IMR-90 (cell line): ENCODE measurements at regions of chr2 and their contacts with region 1.

Region 1: GRCh38 chr2:164000176-164000575 is 264.4 kb upstream of the FIGN start:
- DNase-seq: no peak
- ATAC-seq: no peak
- H3K4me3 ChIP-seq: no peak overlapping the region
- H3K27ac ChIP-seq: no peak overlapping the region
- H3K4me1 ChIP-seq: no peaks in the 10 kb centered on the region
- H3K27me3 ChIP-seq: no peaks in the 10 kb centered on the region
- CTCF ChIP-seq: no peak
- POLR2A ChIP-seq: no peak
- RAD21 ChIP-seq: no peak

Region 2: GRCh38 chr2:164023896-164024295 is 23.7 kb after region 1 on chr2:
- CTCF ChIA-PET with region 1: no interaction called
- POLR2A ChIA-PET with region 1: no interaction called
- dilution Hi-C with region 1: no loop called
- in situ Hi-C with region 1: no loop called
- intact Hi-C with region 1: loop called (anchors 2 kb)
- DNase-seq: no peak
- ATAC-seq: no peak
- H3K4me3 ChIP-seq: no peak overlapping the region
- H3K27ac ChIP-seq: no peak overlapping the region
- H3K4me1 ChIP-seq: no peaks in the 10 kb centered on the region
- H3K27me3 ChIP-seq: no peaks in the 10 kb centered on the region
- CTCF ChIP-seq: no peak
- POLR2A ChIP-seq: no peak
- RAD21 ChIP-seq: no peak